ENCODE measurements at regions of chr7 and their contacts with region 1.

Region 1: GRCh38 chr7:116692401-116693308 is 20.7 kb downstream of the MET start:
- DNase-seq: peak; percentile 85
- ATAC-seq: peak; percentile 52
- H3K4me3 ChIP-seq: peak overlapping the region; percentile 34
- H3K27ac ChIP-seq: peak overlapping the region; percentile 89
- H3K4me1 ChIP-seq: peaks cover 64% of the 10 kb centered on the region
- H3K27me3 ChIP-seq: no peaks in the 10 kb centered on the region
- CTCF ChIP-seq: no peak

Region 2: GRCh38 chr7:116706668-116707126 is 14.0 kb after region 1 on chr7:
- CTCF ChIA-PET with region 1: no interaction called
- POLR2A ChIA-PET with region 1: interaction called, 6 read pairs
- intact Hi-C with region 1: loop called (anchors 1 kb)
- DNase-seq: peak; percentile 85
- ATAC-seq: peak; percentile 59
- H3K4me3 ChIP-seq: peak overlapping the region; percentile 53
- H3K27ac ChIP-seq: peak overlapping the region; percentile 62
- H3K4me1 ChIP-seq: peaks cover 98% of the 10 kb centered on the region
- H3K27me3 ChIP-seq: no peaks in the 10 kb centered on the region
- CTCF ChIP-seq: no peak

Region 3: GRCh38 chr7:116715077-116715476 is 22.4 kb after region 1 on chr7:
- CTCF ChIA-PET with region 1: no interaction called
- POLR2A ChIA-PET with region 1: no interaction called
- intact Hi-C with region 1: loop called (anchors 1 kb)
- DNase-seq: no peak
- ATAC-seq: no peak
- H3K4me3 ChIP-seq: no peak overlapping the region
- H3K27ac ChIP-seq: no peak overlapping the region
- H3K4me1 ChIP-seq: peaks cover 46% of the 10 kb centered on the region
- H3K27me3 ChIP-seq: no peaks in the 10 kb centered on the region
- CTCF ChIP-seq: no peak; the same call in 1 of the 2 replicates